Caco-2 (cell line): ENCODE measurements at regions of chr4 and their contacts with region 1.

Region 1: GRCh38 chr4:109298279-109299010 is 4.0 kb downstream of the COL25A1 start:
- DNase-seq: peak in 1 of 2 experiments; percentile 21
- H3K4me3 ChIP-seq: no peak overlapping the region
- H3K4me3 Mint-ChIP-seq: no peak overlapping the region
- H3K27ac Mint-ChIP-seq: no peak overlapping the region
- H3K4me1 ChIP-seq: no peaks in the 10 kb centered on the region
- H3K4me1 Mint-ChIP-seq: no peaks in the 10 kb centered on the region
- H3K27me3 ChIP-seq: no peaks in the 10 kb centered on the region
- H3K27me3 Mint-ChIP-seq: peaks cover 7% of the 10 kb centered on the region
- CTCF ChIP-seq: peak; percentile 55 to 66

Region 2: DNA sequence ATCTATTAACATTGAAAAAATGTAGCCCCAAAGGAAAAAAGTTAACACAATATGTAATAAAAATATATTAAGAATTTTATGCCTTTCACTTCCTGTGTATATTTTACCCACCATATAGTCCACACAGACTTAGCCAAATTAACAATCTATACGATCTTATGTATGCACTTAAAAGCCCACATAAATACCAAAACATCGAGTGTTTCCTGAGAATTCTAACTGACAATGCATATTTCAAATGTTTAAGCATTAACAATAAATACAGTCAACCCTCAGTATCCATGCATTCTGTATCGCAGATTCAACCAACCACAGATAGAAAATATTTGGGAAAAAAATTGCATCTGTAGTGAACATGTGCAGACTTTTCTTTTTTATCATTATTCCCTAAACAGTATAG is 222.8 kb before region 1 on chr4:
- CTCF ChIA-PET with region 1: no interaction called
- POLR2A ChIA-PET with region 1: no interaction called
- intact Hi-C with region 1: loop called (anchors 1 kb)
- DNase-seq: no peak
- H3K4me3 ChIP-seq: no peak overlapping the region
- H3K4me3 Mint-ChIP-seq: no peak overlapping the region
- H3K27ac Mint-ChIP-seq: no peak overlapping the region
- H3K4me1 ChIP-seq: no peaks in the 10 kb centered on the region
- H3K4me1 Mint-ChIP-seq: no peaks in the 10 kb centered on the region
- H3K27me3 ChIP-seq: no peaks in the 10 kb centered on the region
- H3K27me3 Mint-ChIP-seq: peaks cover 2% of the 10 kb centered on the region
- CTCF ChIP-seq: no peak

Region 3: GRCh38 chr4:109332926-109333464 is 34.5 kb after region 1 on chr4:
- CTCF ChIA-PET with region 1: no interaction called
- POLR2A ChIA-PET with region 1: no interaction called
- intact Hi-C with region 1: no loop called
- DNase-seq: no peak
- H3K4me3 ChIP-seq: no peak overlapping the region
- H3K4me3 Mint-ChIP-seq: no peak overlapping the region
- H3K27ac Mint-ChIP-seq: no peak overlapping the region
- H3K4me1 ChIP-seq: no peaks in the 10 kb centered on the region
- H3K4me1 Mint-ChIP-seq: no peaks in the 10 kb centered on the region
- H3K27me3 ChIP-seq: no peaks in the 10 kb centered on the region
- H3K27me3 Mint-ChIP-seq: peaks cover 17% of the 10 kb centered on the region
- CTCF ChIP-seq: peak in 1 of 2 experiments; percentile 7